HEK293 (cell line): ENCODE measurements at regions of chr2 and their contacts with region 1.

Region 1: GRCh38 chr2:73260034-73260984 is 24.0 kb downstream of the FBXO41 start:
- H3K4me3 ChIP-seq: no peak overlapping the region
- H3K27ac ChIP-seq: no peak overlapping the region
- H3K4me1 ChIP-seq: no peaks in the 10 kb centered on the region
- CTCF ChIP-seq: peak; percentile 71

Region 2: GRCh38 chr2:73212448-73213176 is 47.7 kb before region 1 on chr2:
- CTCF ChIA-PET with region 1: interaction called, 10 read pairs
- POLR2A ChIA-PET with region 1: no interaction called
- H3K4me3 ChIP-seq: no peak overlapping the region
- H3K27ac ChIP-seq: no peak overlapping the region
- H3K4me1 ChIP-seq: no peaks in the 10 kb centered on the region
- CTCF ChIP-seq: peak; percentile 67